Heart right ventricle (tissue), 16 donors: ENCODE measurements at regions of chr1 and their contacts with region 1.

Region 1: DNA sequence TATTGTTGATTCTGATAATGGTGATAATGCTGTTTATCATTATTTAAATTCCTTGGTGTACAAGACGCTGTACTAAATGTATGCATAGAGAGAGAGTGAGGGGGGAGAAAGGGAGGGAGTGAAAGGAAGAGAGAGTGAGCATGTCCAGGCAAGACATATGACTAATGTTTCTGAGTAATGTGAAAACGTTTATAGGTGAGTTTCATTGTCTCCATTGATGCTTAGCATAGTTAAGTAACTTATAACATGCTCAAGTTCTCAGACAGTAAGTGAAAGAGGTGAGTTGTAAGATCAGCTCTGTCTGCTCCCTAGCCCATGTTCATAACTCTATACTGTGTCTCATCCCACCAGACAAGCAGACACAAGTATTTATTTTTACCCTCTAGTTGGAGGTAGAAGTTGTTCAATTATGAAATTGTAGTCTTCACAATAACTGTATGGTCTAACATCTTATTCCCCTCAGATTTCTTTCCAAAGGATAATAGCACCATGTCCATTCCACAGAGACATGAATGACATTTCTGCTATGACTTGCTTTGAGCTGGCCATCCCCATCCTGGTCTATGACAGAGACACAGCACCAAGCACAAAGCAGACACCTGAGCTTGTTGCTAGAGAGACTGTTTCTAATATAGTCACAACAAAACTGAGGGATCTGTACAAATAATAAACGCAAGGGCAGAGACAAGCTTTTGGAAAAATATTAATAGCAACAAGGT is 285.1 kb downstream of the CACNA1E start:
- DNase-seq: no peak
- ATAC-seq: no peak
- H3K4me3 ChIP-seq: no peak overlapping the region
- H3K27ac ChIP-seq: no peak overlapping the region
- H3K4me1 ChIP-seq: no peaks in the 10 kb centered on the region
- H3K27me3 ChIP-seq: peaks cover 0 to 10% (median 4%) of the 10 kb centered on the region in 7 donors
- CTCF ChIP-seq: no peak

Region 2: GRCh38 chr1:181618559-181618958 is 149.8 kb before region 1 on chr1:
- intact Hi-C with region 1: loop called in 1 of 10 experiments (anchors 10 kb)
- DNase-seq: no peak
- ATAC-seq: no peak
- H3K4me3 ChIP-seq: no peak overlapping the region
- H3K27ac ChIP-seq: no peak overlapping the region
- H3K4me1 ChIP-seq: no peaks in the 10 kb centered on the region
- H3K27me3 ChIP-seq: peaks cover 0 to 25% (median 6%) of the 10 kb centered on the region in 7 donors
- CTCF ChIP-seq: no peak